ENCODE measurements at regions of chr1 and their contacts with region 1.

Region 1: GRCh38 chr1:212455803-212456528 is 23.2 kb downstream of the NENF start:
- DNase-seq: peak; percentile 82
- CTCF ChIP-seq: peak; percentile 90

Region 2: DNA sequence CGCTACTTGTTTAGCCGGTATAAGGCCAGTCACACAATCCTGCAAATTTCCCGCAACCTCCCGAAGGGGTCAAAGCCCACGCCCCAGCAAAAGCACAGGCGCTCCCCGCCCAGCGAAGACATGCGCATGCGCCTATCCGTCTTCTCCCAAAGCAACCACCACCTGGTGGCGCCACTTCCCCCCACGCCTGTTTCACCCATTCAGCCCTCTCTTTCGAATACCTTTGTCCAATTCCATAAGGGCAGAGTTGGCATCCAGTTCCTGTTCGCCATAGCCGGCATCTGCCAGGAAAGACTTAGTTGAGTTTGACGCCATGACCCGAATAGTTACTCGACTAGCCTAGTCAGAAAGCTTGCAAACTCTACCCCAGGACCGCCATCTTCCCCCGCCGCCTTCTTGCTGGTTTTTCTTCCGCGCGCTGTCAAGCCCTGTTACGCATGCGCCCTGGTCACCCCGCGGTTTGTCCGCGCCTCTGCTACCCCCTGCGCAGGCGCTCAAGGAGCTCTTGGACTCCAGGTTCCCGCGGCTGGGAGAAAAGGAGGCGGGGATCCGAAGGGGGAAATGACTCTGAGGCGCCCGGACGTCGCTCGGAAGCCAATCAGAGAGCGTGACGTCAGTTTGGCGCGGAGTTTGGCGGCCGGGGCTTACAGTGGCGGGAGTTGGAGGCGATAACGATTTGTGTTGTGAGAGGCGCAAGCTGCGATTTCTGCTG is 420.7 kb before region 1 on chr1 and contains the starts of genes DTL and INTS7:
- CTCF ChIA-PET with region 1: interaction called, 69 read pairs
- POLR2A ChIA-PET with region 1: no interaction called
- DNase-seq: peak; percentile 98
- CTCF ChIP-seq: peak; percentile 80

Region 3: GRCh38 chr1:212078826-212079225 is 377.1 kb before region 1 on chr1:
- CTCF ChIA-PET with region 1: interaction called, 24 read pairs
- POLR2A ChIA-PET with region 1: no interaction called
- DNase-seq: no peak
- CTCF ChIP-seq: no peak

Region 4: GRCh38 chr1:212291505-212292134 is 164.3 kb before region 1 on chr1:
- CTCF ChIA-PET with region 1: interaction called, 22 read pairs
- POLR2A ChIA-PET with region 1: no interaction called
- DNase-seq: peak; percentile 37
- CTCF ChIP-seq: peak; percentile 68

Region 5: DNA sequence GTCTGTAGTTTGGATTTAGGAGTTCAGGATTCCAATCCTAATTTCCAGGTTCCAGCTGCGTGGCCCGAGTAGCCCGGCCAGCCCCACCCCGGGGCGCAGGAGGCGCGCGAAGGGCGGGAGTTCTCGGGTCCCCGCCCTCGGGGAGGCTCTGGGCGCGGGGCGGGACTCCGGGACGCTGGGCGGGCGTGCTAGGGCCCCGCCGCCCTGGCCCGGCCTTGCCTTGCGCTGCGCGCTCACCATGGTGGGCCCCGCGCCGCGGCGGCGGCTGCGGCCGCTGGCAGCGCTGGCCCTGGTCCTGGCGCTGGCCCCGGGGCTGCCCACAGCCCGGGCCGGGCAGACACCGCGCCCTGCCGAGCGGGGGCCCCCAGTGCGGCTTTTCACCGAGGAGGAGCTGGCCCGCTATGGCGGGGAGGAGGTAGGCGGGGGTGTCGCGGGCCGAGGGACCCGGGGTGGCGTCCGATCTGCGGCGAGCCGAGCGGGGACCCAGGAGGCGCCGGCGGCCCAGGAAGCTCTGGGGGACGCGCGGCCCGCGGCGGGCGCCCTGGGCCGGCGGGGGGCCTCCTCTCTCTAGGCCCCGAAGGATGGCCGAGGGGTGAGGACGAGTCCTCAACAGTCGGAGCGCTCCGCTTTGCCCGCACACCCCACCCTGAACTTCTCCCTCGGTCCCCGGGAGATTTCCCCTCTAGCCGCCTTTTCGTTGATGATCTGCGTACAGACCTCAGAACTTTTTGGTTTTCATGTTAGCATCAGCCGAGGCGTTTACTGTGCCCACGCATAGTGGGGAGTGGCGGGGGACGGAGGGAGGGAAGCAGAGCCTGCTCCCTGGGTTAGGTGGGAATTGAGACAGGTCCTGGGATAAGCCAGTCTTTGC is 23.0 kb before region 1 on chr1 and contains the start of gene NENF:
- CTCF ChIA-PET with region 1: interaction called, 73 read pairs
- POLR2A ChIA-PET with region 1: no interaction called
- DNase-seq: peak; percentile 97
- CTCF ChIP-seq: no peak

Region 6: DNA sequence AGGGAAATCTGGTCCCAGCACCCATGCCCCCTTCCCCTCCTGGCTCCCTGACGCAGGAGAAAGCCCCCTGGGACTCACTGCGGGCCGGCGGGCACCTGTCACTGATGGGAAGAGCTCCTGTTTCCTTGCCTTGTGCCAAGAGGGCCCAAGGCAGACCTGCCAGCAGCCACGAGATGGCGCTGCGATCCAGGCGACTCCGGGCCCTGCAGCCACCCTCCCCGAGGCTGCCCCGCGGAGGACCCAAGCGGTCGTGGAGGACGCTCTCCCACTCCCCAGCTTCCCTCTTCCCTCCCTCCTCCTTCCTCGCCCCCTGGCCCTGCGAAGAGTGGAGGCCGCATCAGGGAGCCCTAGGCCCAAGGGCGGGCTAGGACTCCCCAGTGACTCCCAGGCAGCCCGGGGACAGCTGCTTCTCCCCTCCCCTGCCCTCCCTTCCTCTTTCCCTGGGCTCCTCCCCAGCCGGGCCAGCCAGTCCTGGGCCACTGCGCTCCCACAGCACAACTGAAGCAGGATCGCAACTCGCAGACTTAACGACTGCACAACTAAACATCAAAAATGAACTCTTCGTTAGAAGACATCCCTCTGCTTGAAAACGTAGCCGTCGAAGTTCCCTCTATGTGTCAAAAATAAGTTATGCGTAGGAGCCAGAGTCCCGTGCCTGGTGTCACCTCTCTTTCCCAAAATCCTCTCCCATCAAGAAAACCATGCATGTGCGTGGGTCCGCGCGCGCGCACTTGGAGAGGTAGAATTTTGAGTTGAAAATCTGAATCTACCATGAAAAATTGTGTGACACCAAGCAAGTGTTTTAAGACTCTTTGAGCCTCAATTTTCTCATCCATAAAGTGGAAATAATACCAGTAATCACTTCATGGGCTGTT is 209.5 kb after region 1 on chr1:
- CTCF ChIA-PET with region 1: interaction called, 12 read pairs
- POLR2A ChIA-PET with region 1: no interaction called
- DNase-seq: peak; percentile 88
- CTCF ChIP-seq: peak; percentile 99